Activated CD4-positive, alpha-beta T cell treated with anti-CD3 and anti-CD28 coated beads, Interleukin-2, amount 10 ng/mL, durations not matched to agents 24 days and 14 days (primary cell): ENCODE measurements at regions of chr2 and their contacts with region 1.

Region 1: DNA sequence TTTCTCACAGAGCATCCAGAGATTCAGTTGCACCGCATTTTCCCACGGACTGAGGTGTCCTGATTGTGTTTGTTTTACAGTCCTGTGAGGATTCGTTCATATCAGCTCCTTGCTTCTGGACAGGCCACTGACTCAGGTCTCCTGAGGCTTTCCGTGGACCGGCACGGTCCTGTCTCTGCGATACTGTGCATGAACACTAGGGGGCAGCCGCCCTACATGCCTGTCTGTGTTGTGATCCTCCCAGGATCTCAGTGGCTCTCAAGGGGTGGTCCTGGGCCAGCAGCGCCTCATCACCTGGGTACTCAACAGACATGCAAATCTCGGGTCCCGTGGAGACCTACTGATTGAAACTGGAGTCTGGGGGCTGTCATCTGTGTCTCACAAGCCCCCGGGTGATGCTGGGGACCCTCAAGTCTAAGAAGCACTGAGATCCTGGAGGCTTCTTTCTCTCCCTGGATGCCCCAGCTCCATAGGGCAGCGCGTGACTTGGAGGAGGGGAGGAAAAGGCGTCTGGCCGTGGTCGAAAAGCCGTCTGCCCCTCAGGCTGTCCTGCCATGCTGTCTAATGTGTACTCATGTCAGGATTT is 28.9 kb downstream of the IL1R2 start:
- DNase-seq: peak; percentile 95
- H3K4me3 Mint-ChIP-seq: no peak overlapping the region
- H3K27ac Mint-ChIP-seq: no peak overlapping the region
- H3K4me1 Mint-ChIP-seq: peaks cover 6% of the 10 kb centered on the region
- H3K27me3 Mint-ChIP-seq: peaks cover 8% of the 10 kb centered on the region

Region 2: GRCh38 chr2:101883863-101884262 is 136.8 kb before region 1 on chr2:
- intact Hi-C with region 1: no loop called
- DNase-seq: peak; percentile 72
- H3K4me3 Mint-ChIP-seq: no peak overlapping the region
- H3K27ac Mint-ChIP-seq: no peak overlapping the region
- H3K4me1 Mint-ChIP-seq: peaks cover 7% of the 10 kb centered on the region
- H3K27me3 Mint-ChIP-seq: no peaks in the 10 kb centered on the region

Region 3: DNA sequence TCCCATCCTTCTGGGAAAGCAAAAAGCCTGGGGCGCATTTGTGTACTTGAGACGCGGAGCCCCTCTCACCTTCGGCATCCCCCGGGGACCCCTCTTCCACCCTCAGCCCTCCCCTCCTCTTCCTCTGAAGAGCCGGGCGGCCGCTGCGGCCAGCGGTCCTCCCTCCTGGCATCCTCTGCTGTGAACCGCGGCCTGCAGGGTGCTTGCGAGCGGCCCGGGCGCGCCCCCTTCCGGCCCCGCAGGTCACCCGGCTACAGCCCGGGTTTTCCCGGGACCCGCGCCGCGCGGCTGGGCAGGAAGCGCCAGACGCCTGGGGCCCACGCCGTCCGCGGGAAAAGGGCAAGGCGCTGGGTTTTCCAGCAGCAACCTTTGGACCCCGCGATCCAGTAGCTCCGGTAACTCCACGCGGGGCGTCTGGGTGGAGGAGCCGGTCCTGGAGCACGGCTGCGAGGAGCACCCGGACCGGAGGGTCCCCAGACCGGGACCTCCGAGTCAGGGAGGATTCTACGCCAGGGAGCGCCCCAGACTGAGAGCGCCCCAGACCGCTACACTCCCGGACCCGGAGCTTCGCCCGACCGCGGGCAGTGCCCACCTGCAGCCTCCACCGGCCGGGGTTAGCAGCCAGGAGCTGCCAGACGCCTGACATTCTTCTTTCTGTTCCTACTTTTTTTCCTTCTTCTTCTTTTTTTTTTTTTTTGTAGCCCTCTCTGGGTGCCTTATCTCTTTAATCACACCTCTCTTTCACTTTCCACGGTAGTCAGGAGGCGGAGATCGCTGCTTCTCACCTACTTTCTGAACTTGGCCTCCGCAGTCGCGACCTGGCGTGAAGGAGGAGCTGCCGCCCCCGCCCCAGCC is 335.1 kb after region 1 on chr2 and contains the start of gene IL18R1:
- intact Hi-C with region 1: loop called (anchors 5 kb)
- DNase-seq: peak; percentile 92
- H3K4me3 Mint-ChIP-seq: peak within 1 kb of the TSS; percentile 99
- H3K27ac Mint-ChIP-seq: peak within 1 kb of the TSS; percentile 99
- H3K4me1 Mint-ChIP-seq: peaks cover 39% of the 10 kb centered on the region
- H3K27me3 Mint-ChIP-seq: no peaks in the 10 kb centered on the region
- total RNA-seq, gene IL18R1: 41.7 and 50.2 TPM in 2 replicates

Region 4: GRCh38 chr2:102449370-102449974 is 428.8 kb after region 1 on chr2:
- intact Hi-C with region 1: loop called (anchors 1 kb)
- DNase-seq: peak; percentile 91
- H3K4me3 Mint-ChIP-seq: no peak overlapping the region
- H3K27ac Mint-ChIP-seq: no peak overlapping the region
- H3K4me1 Mint-ChIP-seq: peaks cover 12% of the 10 kb centered on the region
- H3K27me3 Mint-ChIP-seq: no peaks in the 10 kb centered on the region